SK-N-SH (cell line): ENCODE measurements at regions of chr17 and their contacts with region 1.

Region 1: GRCh38 chr17:81917565-81918332 is at the start of gene SIRT7:
- DNase-seq: peak; percentile 100
- H3K4me3 ChIP-seq: peak within 1 kb of the TSS; percentile 89 to 100
- H3K27ac ChIP-seq: peak within 1 kb of the TSS; percentile 4 to 71; a peak in 3 of 4 replicates
- H3K4me1 ChIP-seq: peaks cover 7 to 21% of the 10 kb centered on the region in 2 experiments; a peak in 3 of 4 replicates
- H3K27me3 ChIP-seq: no peaks in the 10 kb centered on the region
- CTCF ChIP-seq: no peak
- EP300 ChIP-seq: no peak
- RAD21 ChIP-seq: no peak
- polyA plus RNA-seq, gene SIRT7: 32.6 and 34.1 TPM in 2 replicates

Region 2: GRCh38 chr17:81803728-81804558 is 113.8 kb before region 1 on chr17 and contains the start of gene GCGR:
- CTCF ChIA-PET with region 1: no interaction called
- POLR2A ChIA-PET with region 1: no interaction called
- DNase-seq: peak; percentile 77
- H3K4me3 ChIP-seq: no peak within 1 kb of the TSS; a peak in 1 of 4 replicates
- H3K27ac ChIP-seq: no peak within 1 kb of the TSS
- H3K4me1 ChIP-seq: peaks cover 0 to 8% of the 10 kb centered on the region in 2 experiments; a peak in 1 of 4 replicates
- H3K27me3 ChIP-seq: peaks cover 97% of the 10 kb centered on the region
- CTCF ChIP-seq: no peak
- EP300 ChIP-seq: no peak
- RAD21 ChIP-seq: no peak
- polyA plus RNA-seq, gene GCGR: not detected in 2 replicates

Region 3: GRCh38 chr17:81927653-81928543 is 10.1 kb after region 1 on chr17 and contains the start of gene MAFG:
- CTCF ChIA-PET with region 1: interaction called, 22 read pairs
- POLR2A ChIA-PET with region 1: interaction called, 5 read pairs
- DNase-seq: peak; percentile 100
- H3K4me3 ChIP-seq: peak within 1 kb of the TSS; percentile 92
- H3K27ac ChIP-seq: peak within 1 kb of the TSS; percentile 72 to 85
- H3K4me1 ChIP-seq: peaks cover 20 to 31% of the 10 kb centered on the region in 2 experiments; a peak in 2 of 4 replicates
- H3K27me3 ChIP-seq: no peaks in the 10 kb centered on the region
- CTCF ChIP-seq: peak; percentile 63
- EP300 ChIP-seq: peak in 1 of 2 experiments; percentile 44; a peak in 1 of 4 replicates
- RAD21 ChIP-seq: 0 out of 2 replicates have a peak, but pooled peaks have one; percentile 26
- polyA plus RNA-seq, gene MAFG: 30.3 and 38.7 TPM in 2 replicates